ENCODE measurements at regions of chr16 and their contacts with region 1.

Region 1: DNA sequence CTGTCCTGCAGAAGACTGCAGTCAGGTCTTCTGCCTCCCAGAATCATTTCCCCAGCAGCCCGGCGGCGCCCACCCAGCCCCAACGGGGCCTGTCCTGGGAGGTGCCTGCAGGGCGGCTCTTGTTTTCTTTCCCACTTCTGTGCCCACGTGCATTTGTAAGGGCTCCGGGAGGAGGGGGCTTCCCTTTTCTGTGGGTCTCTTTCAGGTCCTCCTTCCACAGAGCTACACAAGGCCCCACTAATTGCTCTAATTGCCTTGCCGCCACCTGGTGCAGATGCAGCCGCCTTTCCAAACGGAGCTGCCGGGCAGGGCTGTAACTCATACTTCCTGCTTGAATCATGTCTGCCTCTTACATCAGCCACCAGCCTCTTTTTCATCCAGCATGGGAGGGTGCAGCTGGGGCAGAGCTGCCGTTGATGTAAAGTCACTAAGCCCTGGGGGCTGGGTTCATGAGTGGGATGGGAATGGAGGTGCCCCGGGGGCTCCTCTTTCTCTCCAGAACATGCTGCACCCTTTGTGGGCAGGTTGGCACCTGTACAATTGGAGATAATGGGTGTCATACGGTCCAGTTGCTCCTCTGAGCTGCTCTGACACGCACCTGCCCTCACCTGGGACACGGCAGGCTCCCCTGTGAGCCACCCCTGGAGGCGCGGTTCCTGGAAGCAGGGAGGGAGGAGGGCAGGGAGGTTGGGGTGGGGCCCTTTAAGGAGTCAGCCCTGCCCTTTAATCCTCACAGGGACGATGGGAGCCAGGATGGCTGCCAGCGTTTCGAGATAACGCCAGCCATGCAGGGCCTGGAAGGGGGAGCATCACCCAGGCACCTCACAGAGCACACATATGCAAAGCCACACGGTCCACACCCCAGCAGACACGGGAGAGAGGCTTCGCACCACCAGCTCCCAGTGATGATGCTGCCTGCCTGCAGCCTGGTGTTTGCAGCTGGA is 41.1 kb upstream of the KLHDC4 start:
- DNase-seq: peak; percentile 86
- H3K4me3 Mint-ChIP-seq: peak overlapping the region; percentile 85
- H3K27ac Mint-ChIP-seq: peak overlapping the region; percentile 96
- H3K4me1 Mint-ChIP-seq: peaks cover 32% of the 10 kb centered on the region
- H3K27me3 Mint-ChIP-seq: peaks cover 2% of the 10 kb centered on the region

Region 2: DNA sequence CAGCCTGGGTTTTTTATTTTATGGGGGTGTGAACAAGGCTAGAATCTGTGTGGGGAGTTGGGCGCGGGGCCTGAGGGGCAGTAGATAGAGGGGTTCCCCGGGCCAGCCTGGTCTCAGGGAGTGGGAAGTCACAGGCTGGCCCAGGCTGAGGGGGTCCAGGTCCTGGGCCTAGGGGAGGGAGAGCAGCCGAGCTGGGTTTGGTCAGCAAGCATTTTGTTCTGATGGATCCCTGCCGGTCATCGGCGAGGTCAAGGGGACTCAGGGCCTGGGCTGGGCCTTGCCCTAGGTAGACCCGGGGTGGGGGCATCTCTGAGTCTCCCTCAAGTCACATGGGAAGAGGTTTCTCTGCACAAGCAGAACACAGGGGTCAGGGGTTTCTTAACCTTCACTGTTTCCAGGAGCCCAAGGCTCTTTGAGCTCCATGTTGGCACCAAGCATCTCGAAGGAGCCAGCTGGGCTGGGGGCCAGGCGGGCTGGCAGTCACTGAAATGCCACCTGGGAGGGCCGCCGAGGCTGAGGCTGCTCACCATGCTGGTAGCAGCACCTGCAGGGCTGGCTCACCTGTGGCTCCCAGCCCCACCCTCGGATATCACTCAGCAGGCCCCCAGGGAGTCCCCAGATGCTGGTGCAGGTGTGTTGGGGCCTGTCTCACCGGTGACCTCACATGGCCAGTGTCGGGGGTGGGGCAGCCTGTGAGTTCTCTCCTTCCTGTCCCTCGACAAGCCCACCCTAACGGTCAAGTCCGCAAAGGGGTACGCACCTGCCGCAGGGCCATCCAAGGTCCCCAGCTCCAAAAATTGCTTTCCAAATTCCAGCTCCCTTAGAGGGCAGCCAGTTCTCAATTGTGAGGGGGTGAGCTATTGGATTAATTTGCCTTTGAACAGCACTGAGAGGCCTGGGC is 21.4 kb after region 1 on chr16:
- intact Hi-C with region 1: loop called (anchors 2 kb)
- DNase-seq: no peak
- H3K4me3 Mint-ChIP-seq: no peak overlapping the region
- H3K27ac Mint-ChIP-seq: peak overlapping the region; percentile 37
- H3K4me1 Mint-ChIP-seq: peaks cover 1% of the 10 kb centered on the region
- H3K27me3 Mint-ChIP-seq: no peaks in the 10 kb centered on the region

Region 3: GRCh38 chr16:87982491-87983415 is 175.9 kb after region 1 on chr16:
- intact Hi-C with region 1: no loop called
- DNase-seq: no peak
- H3K4me3 Mint-ChIP-seq: no peak overlapping the region
- H3K27ac Mint-ChIP-seq: peak overlapping the region; percentile 80
- H3K4me1 Mint-ChIP-seq: peaks cover 54% of the 10 kb centered on the region
- H3K27me3 Mint-ChIP-seq: no peaks in the 10 kb centered on the region